Adrenal gland (tissue), 19 donors: ENCODE measurements at regions of chr4 and their contacts with region 1.

Region 1: DNA sequence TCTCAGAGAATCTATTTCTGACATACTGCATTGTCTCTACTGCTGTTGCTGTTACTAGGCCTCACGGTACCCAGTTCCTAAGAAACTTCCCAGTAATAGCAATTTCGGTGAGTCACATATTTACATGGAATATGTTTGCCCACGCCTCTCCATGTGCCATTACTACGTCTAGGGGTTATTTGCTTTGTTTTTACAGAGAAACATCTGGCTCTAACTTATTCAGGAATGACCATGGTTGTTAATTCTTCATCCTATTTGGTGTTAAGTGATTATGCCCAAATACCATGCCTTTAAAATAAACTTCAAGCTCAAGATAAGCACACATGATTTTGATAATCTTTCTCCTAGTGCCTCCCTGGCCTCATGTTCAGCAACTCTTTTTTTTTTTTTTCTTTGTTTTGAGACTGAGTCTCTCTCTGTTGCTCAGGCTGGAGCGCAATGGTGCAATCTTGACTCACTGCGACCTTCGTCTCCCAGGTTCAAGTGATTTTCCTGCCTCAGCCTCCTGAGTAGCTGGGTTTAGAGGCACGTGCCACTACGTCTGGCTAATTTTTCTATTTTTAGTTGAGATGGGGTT is 101.0 kb upstream of the HS3ST1 start:
- DNase-seq: no peak
- H3K4me3 ChIP-seq: no peak overlapping the region
- H3K27ac ChIP-seq: no peak overlapping the region
- H3K4me1 ChIP-seq: no peaks in the 10 kb centered on the region
- H3K27me3 ChIP-seq: no peaks in the 10 kb centered on the region
- CTCF ChIP-seq: no peak
- POLR2A ChIP-seq: no peak

Region 2: DNA sequence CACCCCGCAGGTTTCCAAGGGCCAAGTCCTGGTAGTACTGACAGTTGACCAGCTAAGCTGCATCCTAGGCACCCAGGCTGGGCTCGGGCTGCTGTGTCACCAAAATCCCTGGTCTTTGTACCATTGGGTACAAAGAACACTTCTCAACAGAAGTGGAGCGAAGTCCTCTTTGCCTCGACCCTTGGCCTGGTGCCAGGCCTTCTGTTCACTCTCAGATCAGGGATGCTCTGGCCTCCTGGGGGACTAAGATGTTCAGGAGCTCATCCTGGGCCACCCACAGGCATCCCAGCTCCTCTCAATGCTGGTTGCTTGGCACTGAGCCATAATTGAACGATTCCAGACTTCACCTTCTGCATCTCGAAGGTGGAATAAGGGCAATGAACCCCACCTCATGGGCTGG is 1494.6 kb before region 1 on chr4:
- intact Hi-C with region 1: loop called in 1 of 2 experiments (anchors 5 kb)
- DNase-seq: no peak
- H3K4me3 ChIP-seq: no peak overlapping the region
- H3K27ac ChIP-seq: no peak overlapping the region
- H3K4me1 ChIP-seq: peaks cover 14 to 25% of the 10 kb centered on the region in 2 donors
- H3K27me3 ChIP-seq: no peaks in the 10 kb centered on the region
- CTCF ChIP-seq: no peak
- POLR2A ChIP-seq: no peak

Region 3: GRCh38 chr4:10925996-10926395 is 603.7 kb before region 1 on chr4:
- intact Hi-C with region 1: no loop called
- DNase-seq: no peak
- H3K4me3 ChIP-seq: no peak overlapping the region
- H3K27ac ChIP-seq: no peak overlapping the region
- H3K4me1 ChIP-seq: no peaks in the 10 kb centered on the region
- H3K27me3 ChIP-seq: no peaks in the 10 kb centered on the region
- CTCF ChIP-seq: no peak
- POLR2A ChIP-seq: no peak

Region 4: GRCh38 chr4:12399781-12400180 is 870.1 kb after region 1 on chr4:
- intact Hi-C with region 1: no loop called
- DNase-seq: no peak
- H3K4me3 ChIP-seq: no peak overlapping the region
- H3K27ac ChIP-seq: no peak overlapping the region
- H3K4me1 ChIP-seq: no peaks in the 10 kb centered on the region
- H3K27me3 ChIP-seq: no peaks in the 10 kb centered on the region
- CTCF ChIP-seq: no peak
- POLR2A ChIP-seq: no peak